Activated CD8-positive, alpha-beta T cell treated with anti-CD3 and anti-CD28 coated beads for 36 hours (primary cell): ENCODE measurements at regions of chr15 and their contacts with region 1.

Region 1: GRCh38 chr15:40928821-40929659 is at the start of gene DLL4:
- DNase-seq: peak; percentile 57
- ATAC-seq: peak; percentile 53
- H3K4me3 Mint-ChIP-seq: peak within 1 kb of the TSS; percentile 58
- H3K27ac Mint-ChIP-seq: no peak within 1 kb of the TSS
- H3K4me1 Mint-ChIP-seq: peaks cover 50% of the 10 kb centered on the region
- H3K27me3 Mint-ChIP-seq: peaks cover 65% of the 10 kb centered on the region
- CTCF ChIP-seq: no peak
- total RNA-seq, gene DLL4: not detected

Region 2: DNA sequence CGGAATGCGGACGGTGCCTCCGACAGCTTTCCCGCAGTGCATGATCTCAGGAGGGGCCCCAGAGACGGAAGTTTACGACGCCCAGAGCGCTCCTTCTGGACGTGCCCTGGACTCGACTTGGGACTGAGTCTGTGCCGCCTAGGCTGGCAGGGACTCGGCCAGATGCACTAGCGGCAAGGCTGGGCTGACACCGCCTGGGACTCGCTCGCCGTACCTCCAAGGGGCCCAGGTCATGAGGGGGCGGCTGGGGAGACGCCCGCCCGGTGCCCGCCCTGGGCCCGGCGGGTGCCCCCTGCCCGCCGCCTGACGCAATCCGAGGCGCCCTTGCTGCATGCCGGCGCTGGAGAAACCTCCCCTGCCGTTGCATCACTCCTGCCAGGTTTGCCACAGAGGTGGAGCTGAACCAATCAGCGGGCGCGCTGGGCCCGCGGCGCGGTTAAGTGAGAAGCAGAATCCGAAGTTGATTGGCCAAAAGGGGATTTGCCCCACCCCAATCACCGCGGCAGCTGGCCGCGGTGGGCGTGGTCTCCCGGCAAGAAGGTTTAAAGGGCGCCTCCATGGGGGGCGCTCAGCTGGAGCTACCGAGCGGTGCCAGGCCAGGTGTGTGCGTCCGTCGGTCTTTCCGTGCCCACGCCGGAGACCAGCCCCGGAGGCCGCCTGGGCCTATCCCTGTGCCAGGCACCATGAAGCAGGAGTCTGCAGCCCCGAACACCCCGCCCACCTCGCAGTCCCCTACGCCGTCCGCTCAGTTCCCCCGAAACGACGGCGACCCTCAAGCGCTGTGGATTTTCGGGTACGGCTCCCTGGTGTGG is 24.1 kb after region 1 on chr15 and contains the start of gene CHAC1:
- CTCF ChIA-PET with region 1: interaction called, 11 read pairs
- POLR2A ChIA-PET with region 1: interaction called, 7 read pairs
- intact Hi-C with region 1: no loop called
- DNase-seq: peak; percentile 99
- ATAC-seq: peak; percentile 92
- H3K4me3 Mint-ChIP-seq: peak within 1 kb of the TSS; percentile 94
- H3K27ac Mint-ChIP-seq: peak within 1 kb of the TSS; percentile 95
- H3K4me1 Mint-ChIP-seq: peaks cover 28% of the 10 kb centered on the region
- H3K27me3 Mint-ChIP-seq: no peaks in the 10 kb centered on the region
- CTCF ChIP-seq: no peak
- total RNA-seq, gene CHAC1: 21.9 to 22.6 TPM